ENCODE measurements at regions of chr5 and their contacts with region 1.

Region 1: GRCh38 chr5:37494751-37495150 is 115.6 kb downstream of the WDR70 start:
- DNase-seq: no peak
- H3K4me3 ChIP-seq: no peak overlapping the region
- H3K27ac ChIP-seq: no peak overlapping the region
- H3K4me1 ChIP-seq: no peaks in the 10 kb centered on the region
- H3K27me3 ChIP-seq: no peaks in the 10 kb centered on the region
- CTCF ChIP-seq: no peak
- POLR2A ChIP-seq: no peak

Region 2: DNA sequence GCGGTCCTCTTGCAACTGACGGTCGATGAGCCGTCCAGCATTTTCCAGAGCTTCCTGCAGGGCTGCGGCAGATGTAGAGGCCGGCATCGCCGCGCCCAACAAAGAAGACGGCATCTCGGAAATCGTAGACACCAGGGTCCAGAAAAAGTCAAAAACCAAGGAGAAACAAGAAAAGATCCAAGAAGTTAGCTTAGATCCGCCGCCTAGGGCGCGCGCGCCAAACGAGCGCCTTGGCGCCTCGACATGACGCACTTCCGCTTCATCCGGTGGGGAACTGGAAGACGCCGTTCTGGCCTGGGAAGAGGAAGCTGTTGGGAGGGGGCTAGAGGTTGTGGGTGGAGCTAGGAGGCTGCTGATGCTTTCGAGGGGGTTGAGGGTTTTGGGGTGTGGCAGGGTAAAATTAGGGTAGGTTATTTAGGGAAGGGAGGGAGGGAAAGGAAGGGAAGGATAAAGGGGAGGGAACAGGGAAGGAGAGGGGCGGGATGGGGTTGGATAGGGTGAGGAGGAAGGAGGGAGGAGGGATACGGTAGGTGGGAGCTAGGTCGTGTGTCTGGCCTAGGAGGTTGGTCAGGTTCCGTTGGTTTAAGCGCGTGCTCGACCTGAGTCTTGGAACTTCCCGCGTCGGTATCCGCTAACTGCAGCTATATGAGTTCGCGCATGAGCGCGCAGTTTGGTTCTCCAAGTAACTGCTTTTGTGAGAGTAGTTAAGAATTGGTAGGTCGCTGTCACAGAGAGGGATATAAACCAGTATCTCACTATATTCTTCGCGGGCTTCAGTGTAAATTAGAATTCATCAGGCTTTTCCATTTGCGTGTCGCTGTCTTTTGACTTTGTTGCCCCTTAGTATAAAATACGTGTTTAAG is 123.7 kb before region 1 on chr5 and contains the start of gene NUP155:
- intact Hi-C with region 1: no loop called
- DNase-seq: peak; percentile 88
- H3K4me3 ChIP-seq: peak within 1 kb of the TSS; percentile 80 to 89 (median 85)
- H3K27ac ChIP-seq: peak within 1 kb of the TSS; percentile 85 to 92
- H3K4me1 ChIP-seq: peaks cover 0 to 15% of the 10 kb centered on the region in 2 donors
- H3K27me3 ChIP-seq: no peaks in the 10 kb centered on the region
- CTCF ChIP-seq: peak in 1 of 3 donors; percentile 17
- POLR2A ChIP-seq: peak; percentile 36
- total RNA-seq, gene NUP155: 16.6 to 30.9 (median 25.9) TPM

Region 3: DNA sequence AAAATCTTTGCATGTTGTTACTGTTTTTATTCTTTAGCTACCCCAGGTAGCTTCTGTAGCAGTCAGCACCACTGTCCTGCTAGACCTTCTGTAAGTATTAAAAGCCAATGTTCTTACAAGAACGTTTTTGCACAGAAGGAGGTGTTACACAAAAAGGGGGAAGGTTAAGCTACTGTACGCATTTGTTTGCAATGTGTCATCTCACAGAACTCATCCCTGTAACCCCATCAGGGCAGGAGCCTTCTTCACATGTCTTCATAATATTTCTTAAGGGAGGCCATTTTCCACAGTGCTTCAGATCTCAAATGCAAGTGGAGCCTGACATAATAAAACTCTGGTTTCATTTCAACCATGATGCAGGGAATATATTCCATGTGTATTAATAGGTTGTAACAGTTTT is 1419.0 kb after region 1 on chr5:
- intact Hi-C with region 1: loop called (anchors 5 kb)
- DNase-seq: no peak
- H3K4me3 ChIP-seq: no peak overlapping the region
- H3K27ac ChIP-seq: no peak overlapping the region
- H3K4me1 ChIP-seq: no peaks in the 10 kb centered on the region
- H3K27me3 ChIP-seq: no peaks in the 10 kb centered on the region
- CTCF ChIP-seq: no peak
- POLR2A ChIP-seq: no peak

Measured in breast epithelium (tissue), 4 donors.